ENCODE measurements at regions of chr2 and their contacts with region 1.

Region 1: GRCh38 chr2:58156780-58157179 is 84.3 kb downstream of the FANCL start:
- DNase-seq: no peak
- H3K4me3 ChIP-seq: no peak overlapping the region
- H3K4me3 Mint-ChIP-seq: no peak overlapping the region
- H3K27ac Mint-ChIP-seq: no peak overlapping the region
- H3K4me1 ChIP-seq: no peaks in the 10 kb centered on the region
- H3K4me1 Mint-ChIP-seq: no peaks in the 10 kb centered on the region
- H3K27me3 ChIP-seq: no peaks in the 10 kb centered on the region
- H3K27me3 Mint-ChIP-seq: no peaks in the 10 kb centered on the region
- CTCF ChIP-seq: no peak

Region 2: GRCh38 chr2:57160976-57161375 is 995.8 kb before region 1 on chr2:
- CTCF ChIA-PET with region 1: no interaction called
- POLR2A ChIA-PET with region 1: no interaction called
- intact Hi-C with region 1: loop called (anchors 5 kb)
- DNase-seq: no peak
- H3K4me3 ChIP-seq: no peak overlapping the region
- H3K4me3 Mint-ChIP-seq: no peak overlapping the region
- H3K27ac Mint-ChIP-seq: no peak overlapping the region
- H3K4me1 ChIP-seq: no peaks in the 10 kb centered on the region
- H3K4me1 Mint-ChIP-seq: no peaks in the 10 kb centered on the region
- H3K27me3 ChIP-seq: no peaks in the 10 kb centered on the region
- H3K27me3 Mint-ChIP-seq: no peaks in the 10 kb centered on the region
- CTCF ChIP-seq: no peak

Region 3: GRCh38 chr2:57834666-57835065 is 322.1 kb before region 1 on chr2:
- CTCF ChIA-PET with region 1: interaction called, 10 read pairs
- POLR2A ChIA-PET with region 1: no interaction called
- intact Hi-C with region 1: no loop called
- DNase-seq: no peak
- H3K4me3 ChIP-seq: no peak overlapping the region
- H3K4me3 Mint-ChIP-seq: no peak overlapping the region
- H3K27ac Mint-ChIP-seq: no peak overlapping the region
- H3K4me1 ChIP-seq: no peaks in the 10 kb centered on the region
- H3K4me1 Mint-ChIP-seq: no peaks in the 10 kb centered on the region
- H3K27me3 ChIP-seq: no peaks in the 10 kb centered on the region
- H3K27me3 Mint-ChIP-seq: peaks cover 2% of the 10 kb centered on the region
- CTCF ChIP-seq: no peak